ENCODE measurements at regions of chr19 and their contacts with region 1.

Region 1: DNA sequence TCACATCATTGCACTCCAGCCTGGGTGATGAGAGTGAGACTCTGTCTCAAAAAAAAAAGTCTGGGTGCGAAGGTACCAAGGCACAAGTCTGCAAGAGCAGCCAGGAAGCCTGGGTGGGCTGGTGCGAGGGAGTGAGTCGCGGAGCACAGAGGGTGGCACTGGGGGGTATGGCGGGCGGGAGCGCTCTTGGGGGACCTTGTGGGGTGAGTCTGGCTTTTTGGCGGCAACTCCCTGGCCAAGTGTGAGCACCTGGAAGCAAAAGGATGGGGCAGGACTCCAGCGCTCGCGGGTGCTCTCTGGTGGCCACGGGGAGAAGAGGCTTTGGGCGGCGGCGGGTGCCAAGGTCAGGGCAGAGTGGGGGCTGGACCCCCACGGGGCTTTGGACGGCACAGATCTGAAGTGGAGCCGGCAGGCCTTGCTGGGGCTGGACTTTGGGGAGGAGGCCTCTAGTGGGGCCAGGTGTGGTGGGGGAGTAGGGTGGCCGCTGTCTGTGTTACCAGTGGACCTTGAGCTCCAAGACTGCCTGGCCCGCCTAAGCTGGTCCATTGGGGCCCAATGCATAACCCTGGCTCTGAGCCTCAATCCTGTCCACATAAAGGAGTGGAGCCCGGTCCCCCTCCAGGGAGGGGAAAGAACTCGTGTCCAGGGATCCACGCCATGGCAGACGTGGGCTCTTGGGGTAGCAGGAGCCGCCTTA is 1.6 kb downstream of the P2RY11 start:
- DNase-seq: peak; percentile 41
- H3K4me3 ChIP-seq: no peak overlapping the region
- H3K27ac ChIP-seq: no peak overlapping the region
- H3K4me1 ChIP-seq: no peaks in the 10 kb centered on the region
- H3K27me3 ChIP-seq: no peaks in the 10 kb centered on the region
- CTCF ChIP-seq: peak; percentile 11 to 50 (median 39)
- POLR2A ChIP-seq: no peak

Region 2: GRCh38 chr19:9818734-9819589 is 294.1 kb before region 1 on chr19 and contains the start of gene FBXL12:
- intact Hi-C with region 1: no loop called
- DNase-seq: peak; percentile 100
- H3K4me3 ChIP-seq: peak within 1 kb of the TSS; percentile 90 to 93
- H3K27ac ChIP-seq: peak within 1 kb of the TSS; percentile 75 to 93
- H3K4me1 ChIP-seq: peaks cover 8% of the 10 kb centered on the region
- H3K27me3 ChIP-seq: no peaks in the 10 kb centered on the region
- CTCF ChIP-seq: no peak
- POLR2A ChIP-seq: peak; percentile 69
- total RNA-seq, gene FBXL12: 38.7 to 42.6 TPM

Region 3: GRCh38 chr19:10245189-10245939 is 132.3 kb after region 1 on chr19:
- intact Hi-C with region 1: loop called (anchors 10 kb)
- DNase-seq: no peak
- H3K4me3 ChIP-seq: no peak overlapping the region
- H3K27ac ChIP-seq: no peak overlapping the region
- H3K4me1 ChIP-seq: no peaks in the 10 kb centered on the region
- H3K27me3 ChIP-seq: no peaks in the 10 kb centered on the region
- CTCF ChIP-seq: no peak
- POLR2A ChIP-seq: no peak

Measured in testis (tissue), 5 donors.